A673 (cell line): ENCODE measurements at regions of chr6 and their contacts with region 1.

Region 1: DNA sequence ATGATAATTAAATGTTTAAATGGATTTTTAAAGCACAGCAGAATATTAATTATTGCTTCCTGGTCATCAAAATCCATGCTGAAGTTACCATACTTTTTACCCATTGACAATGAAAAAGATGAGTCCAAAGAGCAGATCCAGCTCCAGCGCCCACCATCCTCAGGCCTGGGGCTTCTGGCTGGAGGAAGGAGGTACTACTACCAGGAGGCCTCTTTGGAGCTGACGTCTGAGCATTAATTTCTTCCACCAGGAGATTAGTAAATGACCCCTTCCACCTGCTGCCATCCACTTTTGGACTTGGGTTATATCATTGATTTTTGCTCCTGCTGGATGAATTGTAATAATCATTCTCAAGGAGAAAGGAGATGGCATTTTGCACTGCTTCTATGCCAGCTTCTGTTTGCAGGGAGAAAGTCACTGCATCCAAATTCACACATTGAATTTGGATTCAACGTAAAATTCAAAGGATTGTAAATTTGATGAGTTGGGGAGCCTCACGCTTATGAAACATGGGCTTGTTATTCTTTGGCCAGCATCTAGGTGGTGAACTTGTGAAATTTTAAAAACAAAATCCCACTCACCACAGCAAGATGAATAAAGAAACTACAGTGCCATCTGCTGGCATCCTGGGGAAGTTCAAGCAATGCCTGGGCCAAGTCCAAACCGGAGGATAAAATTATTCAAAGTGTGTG is 121.8 kb downstream of the SASH1 start:
- DNase-seq: peak; percentile 80
- H3K4me3 ChIP-seq: no peak overlapping the region
- H3K27ac ChIP-seq: no peak overlapping the region
- H3K4me1 ChIP-seq: no peaks in the 10 kb centered on the region
- H3K27me3 ChIP-seq: no peaks in the 10 kb centered on the region
- CTCF ChIP-seq: peak; percentile 95

Region 2: DNA sequence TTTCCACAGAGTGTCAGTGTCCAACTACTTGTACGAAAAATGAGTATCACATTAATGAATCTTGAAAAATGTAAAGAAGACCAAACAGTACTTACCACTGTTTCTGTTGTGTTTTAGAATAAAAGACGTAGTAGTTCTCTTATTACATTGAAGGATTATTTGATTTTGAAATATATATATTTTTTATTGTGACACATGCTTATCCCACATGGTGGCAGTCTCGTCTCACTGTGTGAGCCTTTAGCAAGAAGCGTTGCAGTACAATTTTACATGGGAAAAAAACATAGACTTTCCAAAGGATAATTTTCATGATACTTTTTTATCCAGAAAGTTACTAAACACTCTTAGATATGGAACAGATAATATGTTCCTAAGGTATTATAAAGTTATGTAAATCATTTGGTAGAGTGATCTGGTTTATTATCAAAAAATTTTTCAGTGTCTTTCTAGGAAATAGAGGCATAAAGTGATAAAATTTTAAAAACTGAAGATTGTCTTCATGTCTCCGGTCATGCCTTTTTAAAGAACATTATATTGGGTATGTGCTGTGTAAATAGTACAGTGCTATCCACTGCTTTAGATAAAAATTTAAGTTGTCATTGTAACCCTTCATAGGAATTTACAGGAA is 1073.4 kb before region 1 on chr6:
- CTCF ChIA-PET with region 1: no interaction called
- POLR2A ChIA-PET with region 1: no interaction called
- intact Hi-C with region 1: loop called (anchors 5 kb)
- DNase-seq: peak; percentile 68
- H3K4me3 ChIP-seq: no peak overlapping the region
- H3K27ac ChIP-seq: no peak overlapping the region
- H3K4me1 ChIP-seq: no peaks in the 10 kb centered on the region
- H3K27me3 ChIP-seq: no peaks in the 10 kb centered on the region
- CTCF ChIP-seq: peak; percentile 77

Region 3: GRCh38 chr6:148177589-148178233 is 286.8 kb before region 1 on chr6:
- CTCF ChIA-PET with region 1: interaction called, 9 read pairs
- POLR2A ChIA-PET with region 1: no interaction called
- intact Hi-C with region 1: loop called (anchors 1 kb)
- DNase-seq: peak; percentile 72
- H3K4me3 ChIP-seq: no peak overlapping the region
- H3K27ac ChIP-seq: no peak overlapping the region
- H3K4me1 ChIP-seq: no peaks in the 10 kb centered on the region
- H3K27me3 ChIP-seq: no peaks in the 10 kb centered on the region
- CTCF ChIP-seq: peak; percentile 89

Region 4: DNA sequence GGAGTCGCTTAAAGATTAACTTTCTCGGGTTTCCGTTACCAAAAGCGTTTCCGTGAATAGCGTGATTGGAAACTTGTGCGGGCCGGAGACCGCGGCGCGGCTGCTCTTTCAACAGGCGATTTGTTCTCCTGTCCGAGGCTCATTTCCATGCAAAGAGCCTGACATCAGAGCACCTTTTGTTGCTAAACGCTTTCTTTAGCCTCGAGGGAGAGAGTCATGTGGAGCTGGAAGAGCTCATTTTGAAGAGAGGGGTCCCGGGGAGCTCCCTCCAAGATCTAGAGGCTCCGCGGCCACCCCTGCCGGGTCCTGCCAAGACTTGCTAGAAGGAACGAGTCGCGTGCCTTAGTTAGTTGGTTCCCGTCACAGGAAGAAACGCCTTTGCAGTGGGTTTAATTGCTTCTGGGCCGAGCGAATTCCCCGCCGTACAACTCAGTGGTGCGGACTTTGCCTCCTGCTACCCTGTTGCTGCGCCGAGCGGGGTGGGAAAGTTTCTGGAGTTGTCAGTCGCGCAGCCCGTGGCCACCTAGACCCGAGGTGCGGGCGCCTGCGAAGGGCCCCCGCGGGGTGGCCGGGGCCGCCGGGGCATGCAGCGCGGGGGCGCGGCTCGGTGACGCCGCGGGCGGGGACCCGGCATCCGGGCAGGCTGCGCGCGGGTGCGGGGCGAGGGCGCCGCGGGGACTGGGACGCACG is 122.0 kb before region 1 on chr6 and contains the start of gene SASH1:
- CTCF ChIA-PET with region 1: no interaction called
- POLR2A ChIA-PET with region 1: no interaction called
- intact Hi-C with region 1: loop called (anchors 5 kb)
- DNase-seq: peak; percentile 86
- H3K4me3 ChIP-seq: peak within 1 kb of the TSS; percentile 66
- H3K27ac ChIP-seq: peak within 1 kb of the TSS; percentile 98
- H3K4me1 ChIP-seq: peaks cover 45% of the 10 kb centered on the region
- H3K27me3 ChIP-seq: no peaks in the 10 kb centered on the region
- CTCF ChIP-seq: no peak
- total RNA-seq, gene SASH1: 19.2 and 21.7 TPM in 2 replicates

Region 5: DNA sequence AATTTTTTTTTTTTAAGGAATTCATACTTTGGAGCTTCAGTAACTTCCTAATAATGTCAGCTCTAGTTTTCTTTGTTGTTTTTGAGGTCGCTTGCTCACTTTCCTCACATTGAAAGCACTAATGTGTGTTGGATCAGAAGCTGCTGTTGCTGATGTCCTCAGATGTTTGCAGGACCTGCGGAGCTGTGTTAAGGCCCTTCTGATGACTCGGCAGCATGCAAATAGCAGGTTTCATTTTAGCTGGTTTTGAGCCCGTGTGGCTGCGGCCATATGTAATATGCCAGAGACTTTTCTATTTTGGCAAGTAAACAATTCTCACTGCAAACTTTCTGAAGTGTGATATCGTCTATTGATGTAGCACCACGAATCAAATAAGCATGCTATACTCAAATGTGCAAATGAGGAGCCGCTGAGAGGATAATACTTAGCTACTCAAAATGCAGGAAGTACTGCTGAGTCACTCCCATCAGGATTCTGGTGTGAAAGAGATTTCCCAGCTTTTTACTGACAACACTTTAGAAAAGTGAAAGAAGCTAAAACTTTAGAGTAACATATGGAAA is 66.0 kb after region 1 on chr6:
- CTCF ChIA-PET with region 1: no interaction called
- POLR2A ChIA-PET with region 1: no interaction called
- intact Hi-C with region 1: loop called (anchors 2 kb)
- DNase-seq: peak; percentile 89
- H3K4me3 ChIP-seq: no peak overlapping the region
- H3K27ac ChIP-seq: peak overlapping the region; percentile 89
- H3K4me1 ChIP-seq: peaks cover 22% of the 10 kb centered on the region
- H3K27me3 ChIP-seq: no peaks in the 10 kb centered on the region
- CTCF ChIP-seq: no peak

Region 6: GRCh38 chr6:148885136-148885870 is 420.8 kb after region 1 on chr6:
- CTCF ChIA-PET with region 1: no interaction called
- POLR2A ChIA-PET with region 1: no interaction called
- intact Hi-C with region 1: no loop called
- DNase-seq: no peak
- H3K4me3 ChIP-seq: no peak overlapping the region
- H3K27ac ChIP-seq: no peak overlapping the region
- H3K4me1 ChIP-seq: peaks cover 20% of the 10 kb centered on the region
- H3K27me3 ChIP-seq: no peaks in the 10 kb centered on the region
- CTCF ChIP-seq: no peak